ENCODE measurements at regions of chr6 and their contacts with region 1.

Region 1: DNA sequence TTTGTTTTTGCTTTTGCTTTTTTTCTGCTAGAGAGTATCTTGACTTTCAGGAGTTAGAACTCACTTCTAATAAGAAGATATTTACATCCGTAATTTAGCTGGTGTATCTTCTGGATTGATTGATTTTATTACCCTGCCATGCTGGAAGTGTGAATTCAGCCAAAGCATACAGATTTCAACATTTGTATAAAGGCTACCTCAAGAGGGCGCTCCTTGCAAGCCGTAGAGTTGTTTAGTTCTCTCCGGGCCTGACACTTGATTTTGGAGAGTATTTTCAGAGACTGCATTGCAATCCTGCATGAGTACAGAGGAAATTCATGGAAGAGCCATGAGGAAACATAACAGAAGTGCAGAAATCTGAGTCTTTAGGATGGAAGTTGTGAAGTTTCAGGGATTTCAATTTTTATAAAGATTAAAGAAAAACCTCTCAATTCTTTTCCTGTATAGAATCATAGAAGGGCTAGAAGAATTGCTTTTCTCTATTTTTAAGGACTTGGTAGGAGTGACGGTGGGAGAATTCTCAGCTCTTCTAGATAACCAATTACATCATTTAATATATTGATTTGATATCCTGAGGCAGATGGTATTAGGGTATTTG is 66.7 kb upstream of the TIAM2 start:
- DNase-seq: no peak
- H3K4me3 ChIP-seq: no peak overlapping the region
- H3K27ac ChIP-seq: no peak overlapping the region
- H3K4me1 ChIP-seq: peaks cover 22% of the 10 kb centered on the region
- H3K27me3 ChIP-seq: no peaks in the 10 kb centered on the region
- CTCF ChIP-seq: peak; percentile 79

Region 2: GRCh38 chr6:155174576-155175211 is 246.3 kb after region 1 on chr6:
- intact Hi-C with region 1: loop called (anchors 5 kb)
- DNase-seq: no peak
- H3K4me3 ChIP-seq: no peak overlapping the region
- H3K27ac ChIP-seq: no peak overlapping the region
- H3K4me1 ChIP-seq: peaks cover 15% of the 10 kb centered on the region
- H3K27me3 ChIP-seq: no peaks in the 10 kb centered on the region
- CTCF ChIP-seq: peak; percentile 65